ENCODE measurements at regions of chr3 and their contacts with region 1.

Region 1: DNA sequence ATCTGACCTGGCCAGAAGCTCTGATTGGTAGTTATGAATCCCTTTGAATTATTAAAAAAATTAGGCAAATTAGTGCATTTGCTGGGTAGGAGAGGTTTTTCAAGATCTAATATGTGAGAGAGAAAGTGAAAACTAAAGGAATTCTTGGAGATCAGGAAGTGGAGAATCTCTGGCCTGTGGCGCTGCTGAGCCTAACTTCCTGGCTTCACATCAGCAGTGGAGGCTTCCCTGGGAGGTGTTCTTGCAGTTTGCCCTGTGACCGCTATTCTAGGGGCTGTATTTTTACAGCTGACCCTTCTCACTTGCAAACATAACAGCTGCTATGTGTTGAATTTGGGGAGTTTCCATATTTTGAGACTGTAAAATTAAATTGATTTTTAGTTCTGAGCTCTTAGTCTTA is 166.4 kb downstream of the ATG7 start:
- DNase-seq: no peak
- ATAC-seq: no peak
- H3K4me3 ChIP-seq: no peak overlapping the region
- H3K4me3 Mint-ChIP-seq: no peak overlapping the region
- H3K27ac ChIP-seq: no peak overlapping the region
- H3K27ac Mint-ChIP-seq: no peak overlapping the region
- H3K4me1 ChIP-seq: no peaks in the 10 kb centered on the region
- H3K4me1 Mint-ChIP-seq: peaks cover 0 to 5% (median 0%) of the 10 kb centered on the region in 3 donors
- H3K27me3 ChIP-seq: no peaks in the 10 kb centered on the region
- H3K27me3 Mint-ChIP-seq: no peaks in the 10 kb centered on the region

Region 2: DNA sequence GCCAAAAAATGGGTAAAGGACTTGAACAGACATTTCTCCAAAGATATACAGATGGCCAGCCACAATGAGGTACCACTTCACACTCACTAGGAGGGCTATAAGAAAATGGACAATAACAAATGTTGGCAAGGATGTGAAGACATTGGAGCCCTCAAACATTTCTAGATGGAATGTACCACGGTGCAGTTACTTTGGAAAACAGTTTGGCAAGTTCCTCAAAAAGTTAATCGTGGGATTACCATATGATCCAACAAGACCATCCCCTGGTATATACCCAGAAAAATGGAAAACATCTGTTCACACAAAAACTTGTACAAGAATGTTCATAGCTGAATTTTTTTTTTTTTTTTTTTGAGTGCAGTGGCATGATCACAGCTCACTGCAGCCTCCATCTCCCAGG is 300.3 kb before region 1 on chr3:
- CTCF ChIA-PET with region 1: no interaction called
- POLR2A ChIA-PET with region 1: interaction called in 1 of 2 experiments, 13 read pairs
- DNase-seq: no peak
- ATAC-seq: no peak
- H3K4me3 ChIP-seq: no peak overlapping the region
- H3K4me3 Mint-ChIP-seq: no peak overlapping the region
- H3K27ac ChIP-seq: no peak overlapping the region
- H3K27ac Mint-ChIP-seq: no peak overlapping the region
- H3K4me1 ChIP-seq: no peaks in the 10 kb centered on the region
- H3K4me1 Mint-ChIP-seq: peaks cover 6 to 8% (median 8%) of the 10 kb centered on the region in 3 donors
- H3K27me3 ChIP-seq: peaks cover 0 to 16% of the 10 kb centered on the region in 2 experiments
- H3K27me3 Mint-ChIP-seq: peaks cover 12% of the 10 kb centered on the region in 2 donors